ENCODE measurements at regions of chr2 and their contacts with region 1.

Region 1: GRCh38 chr2:101518578-101519492 is 43.9 kb upstream of the RFX8 start:
- DNase-seq: peak; percentile 27
- H3K4me3 ChIP-seq: no peak overlapping the region
- H3K27ac ChIP-seq: no peak overlapping the region
- H3K4me1 ChIP-seq: peaks cover 0 to 14% (median 2%) of the 10 kb centered on the region in 4 donors
- H3K27me3 ChIP-seq: no peaks in the 10 kb centered on the region
- CTCF ChIP-seq: peak in 4 of 5 experiments; percentile 24 to 27 (median 26)
- EP300 ChIP-seq: no peak
- POLR2A ChIP-seq: no peak

Region 2: DNA sequence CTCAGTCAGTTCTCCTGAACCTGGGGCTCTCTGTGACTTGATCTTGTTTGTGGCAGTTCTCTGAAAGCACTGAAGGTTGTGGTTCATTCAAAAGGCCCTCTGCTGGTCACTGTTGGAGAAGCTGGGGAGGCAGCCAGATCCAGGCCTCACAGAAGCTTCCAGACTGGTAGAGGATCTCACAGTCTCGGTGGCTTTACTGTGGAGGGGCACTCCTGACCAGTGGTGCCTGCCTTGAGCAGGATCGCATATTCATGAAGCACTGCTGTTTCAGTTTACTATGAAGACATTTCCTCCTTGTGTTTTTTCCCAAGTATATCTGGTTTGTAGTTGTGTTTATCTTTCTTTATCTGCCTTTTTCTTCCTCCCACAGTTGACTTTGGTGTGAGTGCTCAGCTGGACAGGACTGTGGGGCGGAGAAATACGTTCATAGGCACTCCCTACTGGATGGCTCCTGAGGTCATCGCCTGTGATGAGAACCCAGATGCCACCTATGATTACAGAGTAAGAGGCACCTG is 312.6 kb after region 1 on chr2:
- in situ Hi-C with region 1: loop called in 1 of 4 experiments (anchors 25 kb)
- intact Hi-C with region 1: loop called (anchors 2 kb)
- DNase-seq: peak; percentile 72
- H3K4me3 ChIP-seq: no peak overlapping the region
- H3K27ac ChIP-seq: peak overlapping the region; percentile 5 to 55 (median 15)
- H3K4me1 ChIP-seq: peaks cover 0 to 31% (median 4%) of the 10 kb centered on the region in 4 donors
- H3K27me3 ChIP-seq: no peaks in the 10 kb centered on the region
- CTCF ChIP-seq: peak; percentile 66 to 76 (median 73)
- EP300 ChIP-seq: no peak
- POLR2A ChIP-seq: no peak

Region 3: GRCh38 chr2:102677244-102678215 is 1158.7 kb after region 1 on chr2:
- in situ Hi-C with region 1: no loop called
- intact Hi-C with region 1: no loop called
- DNase-seq: no peak
- H3K4me3 ChIP-seq: no peak overlapping the region
- H3K27ac ChIP-seq: no peak overlapping the region
- H3K4me1 ChIP-seq: no peaks in the 10 kb centered on the region
- H3K27me3 ChIP-seq: no peaks in the 10 kb centered on the region
- CTCF ChIP-seq: no peak
- EP300 ChIP-seq: no peak
- POLR2A ChIP-seq: no peak